Dorsolateral prefrontal cortex (tissue), 120 donors: ENCODE measurements at regions of chr5 and their contacts with region 1.

Region 1: DNA sequence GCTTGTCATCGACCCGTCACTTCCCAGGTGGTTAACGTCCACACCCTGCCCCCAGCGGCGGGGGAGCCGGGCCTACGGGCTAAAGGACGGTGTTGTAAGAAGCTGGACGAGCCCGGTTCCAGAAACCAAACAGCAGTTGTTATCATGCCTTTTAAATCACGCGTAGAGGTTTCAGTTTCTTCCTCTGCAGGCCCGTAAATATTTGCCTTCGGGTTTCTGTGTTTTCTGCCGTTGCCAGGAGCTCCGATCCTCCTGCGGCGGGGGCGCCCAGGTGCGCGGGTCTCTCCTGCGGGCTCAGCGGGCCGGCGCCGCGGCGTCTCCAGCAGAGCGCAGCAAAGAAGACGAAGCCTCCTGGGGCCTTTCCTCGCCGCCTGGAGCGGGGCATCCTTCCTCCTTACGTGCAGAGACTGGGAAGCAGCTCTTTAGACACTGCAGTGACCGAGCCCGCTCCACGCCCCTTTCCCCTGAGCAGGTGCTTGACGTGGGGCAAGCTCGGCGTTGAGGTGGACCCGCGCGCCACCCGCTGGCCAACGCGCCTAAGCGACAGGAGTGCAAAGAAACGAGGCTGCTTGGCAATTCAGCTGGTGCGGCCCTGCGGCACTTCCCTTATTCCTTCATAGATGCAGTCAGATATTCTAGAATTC is 21.8 kb upstream of the TTC1 start:
- DNase-seq: peak; percentile 67 to 87 (median 82)
- H3K4me3 ChIP-seq: peak overlapping the region; percentile 22 to 77 (median 59)
- H3K27ac ChIP-seq: no peak overlapping the region
- H3K27me3 ChIP-seq: peaks cover 0 to 16% (median 0%) of the 10 kb centered on the region in 45 donors
- CTCF ChIP-seq: peak in 55 of 56 donors; percentile 48 to 81 (median 68)

Region 2: GRCh38 chr5:159286420-159287035 is 700.6 kb before region 1 on chr5:
- intact Hi-C with region 1: loop called in 1 of 2 experiments (anchors 10 kb)
- DNase-seq: no peak
- H3K4me3 ChIP-seq: no peak overlapping the region
- H3K27ac ChIP-seq: no peak overlapping the region
- H3K27me3 ChIP-seq: no peaks in the 10 kb centered on the region
- CTCF ChIP-seq: peak; percentile 17 to 79 (median 55)

Region 3: DNA sequence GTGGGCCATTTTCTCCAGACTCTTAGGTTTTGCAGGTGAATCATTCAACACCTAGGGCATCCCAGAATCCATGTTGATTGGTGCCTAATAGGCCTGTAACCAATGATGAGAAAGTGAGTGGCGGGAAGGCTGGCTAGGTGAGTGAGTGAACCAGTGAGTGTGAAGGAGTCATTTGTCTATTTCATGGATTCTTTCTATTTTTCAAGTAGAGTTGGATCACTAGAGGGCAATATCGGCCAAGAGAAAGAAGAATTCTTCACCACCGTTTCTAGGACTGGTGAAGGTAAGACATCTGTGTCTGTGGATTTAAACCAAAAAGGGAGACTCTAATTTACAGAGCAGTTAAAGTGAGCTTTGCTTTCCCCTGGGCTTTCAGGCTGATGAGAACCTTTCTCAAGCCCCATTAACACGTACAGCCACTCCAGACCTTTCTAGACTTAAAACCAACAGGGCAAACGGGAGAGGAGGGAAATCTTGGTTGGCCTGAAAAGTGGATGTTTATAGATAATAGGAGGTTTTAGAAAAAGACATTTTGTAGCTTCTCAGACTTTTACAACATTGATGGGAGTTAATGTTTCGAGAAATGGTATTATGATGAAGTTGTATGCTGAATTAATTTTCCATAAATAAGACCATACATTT is 542.6 kb before region 1 on chr5:
- intact Hi-C with region 1: loop called (anchors 5 to 10 kb)
- DNase-seq: no peak
- H3K4me3 ChIP-seq: no peak overlapping the region
- H3K27ac ChIP-seq: no peak overlapping the region
- H3K27me3 ChIP-seq: no peaks in the 10 kb centered on the region
- CTCF ChIP-seq: peak in 51 of 56 donors; percentile 15 to 71 (median 51)